CD4-positive, alpha-beta memory T cell (primary cell): ENCODE measurements at regions of chr15 and their contacts with region 1.

Region 1: DNA sequence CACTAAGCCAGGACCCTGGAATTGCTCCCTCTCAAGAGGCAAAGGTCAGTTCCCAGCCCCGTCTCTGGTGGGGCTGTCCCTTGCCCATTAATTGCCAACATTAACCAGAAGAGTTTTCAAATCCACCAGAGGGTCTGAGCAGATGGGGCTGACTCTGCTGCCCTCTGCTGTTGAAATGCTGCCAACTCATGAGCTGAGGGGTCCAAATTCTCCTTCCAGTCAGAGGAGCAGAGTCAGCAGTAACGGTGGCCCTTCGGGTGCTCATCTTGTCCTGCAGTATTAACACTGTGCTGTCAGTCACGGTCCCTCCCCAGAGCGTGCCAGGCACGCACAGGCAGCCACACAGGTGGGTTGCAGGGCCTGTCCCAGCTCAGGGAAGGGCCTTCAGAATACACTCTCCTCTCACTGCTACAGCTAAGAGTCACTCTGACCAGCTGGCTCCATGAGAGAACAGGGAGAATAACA is 10.7 kb upstream of the SPTBN5 start:
- DNase-seq: peak; percentile 68 to 76 (median 69)
- H3K4me3 ChIP-seq: no peak overlapping the region
- H3K4me3 Mint-ChIP-seq: no peak overlapping the region
- H3K27ac ChIP-seq: no peak overlapping the region
- H3K27ac Mint-ChIP-seq: peak overlapping the region in 6 of 7 donors; percentile 63 to 89 (median 80)
- H3K4me1 ChIP-seq: peaks cover 7% of the 10 kb centered on the region
- H3K4me1 Mint-ChIP-seq: peaks cover 6 to 13% (median 10%) of the 10 kb centered on the region in 4 donors
- H3K27me3 ChIP-seq: no peaks in the 10 kb centered on the region
- H3K27me3 Mint-ChIP-seq: no peaks in the 10 kb centered on the region

Region 2: GRCh38 chr15:41603941-41604911 is 300.3 kb before region 1 on chr15:
- CTCF ChIA-PET with region 1: interaction called, 10 read pairs
- POLR2A ChIA-PET with region 1: no interaction called
- intact Hi-C with region 1: loop called (anchors 1 kb)
- DNase-seq: peak; percentile 53 to 58 (median 53)
- H3K4me3 ChIP-seq: peak overlapping the region in 1 of 2 donors; percentile 36
- H3K4me3 Mint-ChIP-seq: peak overlapping the region; percentile 49 to 87 (median 78)
- H3K27ac ChIP-seq: no peak overlapping the region
- H3K27ac Mint-ChIP-seq: peak overlapping the region in 1 of 7 donors; percentile 68
- H3K4me1 ChIP-seq: peaks cover 6% of the 10 kb centered on the region
- H3K4me1 Mint-ChIP-seq: peaks cover 8 to 10% (median 9%) of the 10 kb centered on the region in 4 donors
- H3K27me3 ChIP-seq: peaks cover 3% of the 10 kb centered on the region
- H3K27me3 Mint-ChIP-seq: peaks cover 13 to 15% of the 10 kb centered on the region in 2 donors

Region 3: GRCh38 chr15:41811432-41812195 is 93.0 kb before region 1 on chr15:
- CTCF ChIA-PET with region 1: interaction called, 52 read pairs
- POLR2A ChIA-PET with region 1: interaction called, 4 read pairs
- intact Hi-C with region 1: loop called (anchors 1 kb)
- DNase-seq: peak; percentile 68 to 75 (median 70)
- H3K4me3 ChIP-seq: no peak overlapping the region
- H3K4me3 Mint-ChIP-seq: peak overlapping the region in 1 of 8 donors; percentile 1
- H3K27ac ChIP-seq: no peak overlapping the region
- H3K27ac Mint-ChIP-seq: peak overlapping the region in 4 of 7 donors; percentile 29 to 57 (median 37)
- H3K4me1 ChIP-seq: peaks cover 12% of the 10 kb centered on the region
- H3K4me1 Mint-ChIP-seq: peaks cover 7 to 21% (median 13%) of the 10 kb centered on the region in 4 donors
- H3K27me3 ChIP-seq: no peaks in the 10 kb centered on the region
- H3K27me3 Mint-ChIP-seq: no peaks in the 10 kb centered on the region

Region 4: GRCh38 chr15:41844814-41845213 is 59.8 kb before region 1 on chr15:
- CTCF ChIA-PET with region 1: interaction called, 10 read pairs
- POLR2A ChIA-PET with region 1: no interaction called
- intact Hi-C with region 1: no loop called
- DNase-seq: no peak
- H3K4me3 ChIP-seq: no peak overlapping the region
- H3K4me3 Mint-ChIP-seq: no peak overlapping the region
- H3K27ac ChIP-seq: no peak overlapping the region
- H3K27ac Mint-ChIP-seq: no peak overlapping the region
- H3K4me1 ChIP-seq: no peaks in the 10 kb centered on the region
- H3K4me1 Mint-ChIP-seq: no peaks in the 10 kb centered on the region
- H3K27me3 ChIP-seq: no peaks in the 10 kb centered on the region
- H3K27me3 Mint-ChIP-seq: no peaks in the 10 kb centered on the region

Region 5: GRCh38 chr15:41936649-41937567 is 32.3 kb after region 1 on chr15:
- CTCF ChIA-PET with region 1: interaction called, 127 read pairs
- POLR2A ChIA-PET with region 1: interaction called, 49 read pairs
- intact Hi-C with region 1: loop called (anchors 1 kb)
- DNase-seq: peak; percentile 80 to 95 (median 81)
- H3K4me3 ChIP-seq: peak overlapping the region in 1 of 2 donors; percentile 12
- H3K4me3 Mint-ChIP-seq: peak overlapping the region; percentile 77 to 95 (median 89)
- H3K27ac ChIP-seq: peak overlapping the region; percentile 97
- H3K27ac Mint-ChIP-seq: peak overlapping the region; percentile 94 to 100 (median 100)
- H3K4me1 ChIP-seq: peaks cover 75% of the 10 kb centered on the region
- H3K4me1 Mint-ChIP-seq: peaks cover 46 to 76% (median 67%) of the 10 kb centered on the region in 4 donors
- H3K27me3 ChIP-seq: no peaks in the 10 kb centered on the region
- H3K27me3 Mint-ChIP-seq: no peaks in the 10 kb centered on the region

Region 6: GRCh38 chr15:42056934-42057779 is 152.6 kb after region 1 on chr15:
- CTCF ChIA-PET with region 1: no interaction called
- POLR2A ChIA-PET with region 1: no interaction called
- intact Hi-C with region 1: loop called (anchors 1 kb)
- DNase-seq: peak; percentile 22 to 83 (median 58)
- H3K4me3 ChIP-seq: peak overlapping the region in 1 of 2 donors; percentile 11
- H3K4me3 Mint-ChIP-seq: peak overlapping the region; percentile 18 to 68 (median 62)
- H3K27ac ChIP-seq: no peak overlapping the region
- H3K27ac Mint-ChIP-seq: peak overlapping the region; percentile 68 to 91 (median 79)
- H3K4me1 ChIP-seq: peaks cover 13% of the 10 kb centered on the region
- H3K4me1 Mint-ChIP-seq: peaks cover 2 to 26% (median 8%) of the 10 kb centered on the region in 4 donors
- H3K27me3 ChIP-seq: no peaks in the 10 kb centered on the region
- H3K27me3 Mint-ChIP-seq: peaks cover 14 to 20% of the 10 kb centered on the region in 2 donors